HEK293 (cell line): ENCODE measurements at regions of chr5 and their contacts with region 1.

Region 1: GRCh38 chr5:145975361-145976066 is 39.1 kb downstream of the SH3RF2 start:
- H3K4me3 ChIP-seq: no peak overlapping the region
- H3K27ac ChIP-seq: no peak overlapping the region
- H3K4me1 ChIP-seq: peaks cover 26% of the 10 kb centered on the region
- CTCF ChIP-seq: no peak

Region 2: GRCh38 chr5:145925353-145925752 is 50.2 kb before region 1 on chr5:
- CTCF ChIA-PET with region 1: no interaction called
- POLR2A ChIA-PET with region 1: no interaction called
- H3K4me3 ChIP-seq: no peak overlapping the region
- H3K27ac ChIP-seq: no peak overlapping the region
- H3K4me1 ChIP-seq: peaks cover 10% of the 10 kb centered on the region; the same call in 1 of the 2 replicates
- CTCF ChIP-seq: no peak

Region 3: DNA sequence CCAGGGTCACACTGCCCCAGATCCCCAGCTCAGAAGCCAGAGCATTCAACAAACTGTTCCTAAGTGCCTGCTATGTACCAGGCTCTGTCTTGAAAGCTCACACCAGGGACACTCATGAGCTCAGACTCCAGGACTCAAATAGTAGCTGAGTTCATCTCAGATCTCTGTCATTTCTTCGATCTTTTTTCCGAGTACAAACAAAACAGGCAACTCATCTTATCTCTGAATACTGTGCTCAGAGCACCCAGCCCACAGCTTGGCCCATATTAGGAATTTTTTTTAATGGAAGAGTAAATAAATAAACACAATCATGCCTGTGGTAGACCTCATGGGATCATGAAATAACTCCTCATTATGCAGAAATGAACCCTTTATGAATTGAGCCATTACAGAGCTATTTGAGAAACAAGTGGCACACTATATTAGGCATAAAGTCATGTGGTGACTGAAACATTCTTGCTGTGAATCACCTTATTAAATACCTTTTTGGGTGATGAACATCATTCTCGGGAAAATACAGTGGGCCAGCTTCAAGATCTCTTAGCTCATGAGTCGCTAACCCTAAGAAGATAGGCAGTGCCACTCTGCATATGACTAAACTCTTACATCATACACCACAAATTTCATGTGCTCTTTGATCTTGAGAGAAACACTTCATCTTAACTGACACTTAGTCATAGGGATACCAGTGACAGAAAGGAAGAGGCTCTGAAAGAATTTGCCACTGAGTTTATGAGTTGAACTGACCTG is 29.2 kb before region 1 on chr5:
- CTCF ChIA-PET with region 1: interaction called, 3 read pairs
- POLR2A ChIA-PET with region 1: interaction called, 10 read pairs
- H3K4me3 ChIP-seq: no peak overlapping the region
- H3K27ac ChIP-seq: peak overlapping the region; percentile 57
- H3K4me1 ChIP-seq: peaks cover 24% of the 10 kb centered on the region
- CTCF ChIP-seq: no peak

Region 4: DNA sequence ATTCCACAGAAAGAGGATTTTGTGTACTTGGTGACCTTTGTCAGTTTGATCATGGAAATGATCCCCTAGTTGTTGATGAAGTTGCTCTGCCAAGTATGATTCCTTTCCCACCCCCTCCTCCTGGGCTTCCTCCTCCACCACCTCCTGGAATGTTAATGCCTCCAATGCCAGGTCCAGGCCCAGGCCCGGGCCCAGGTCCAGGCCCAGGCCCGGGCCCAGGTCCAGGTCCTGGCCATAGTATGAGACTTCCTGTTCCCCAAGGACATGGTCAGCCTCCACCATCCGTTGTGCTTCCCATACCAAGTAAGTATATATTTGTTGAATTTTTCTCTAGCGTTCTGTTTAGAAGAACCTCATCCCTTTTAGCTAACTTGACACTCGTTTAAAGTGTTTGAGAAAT is 257.9 kb after region 1 on chr5:
- CTCF ChIA-PET with region 1: no interaction called
- POLR2A ChIA-PET with region 1: no interaction called
- H3K4me3 ChIP-seq: no peak overlapping the region
- H3K27ac ChIP-seq: no peak overlapping the region
- H3K4me1 ChIP-seq: no peaks in the 10 kb centered on the region
- CTCF ChIP-seq: no peak